Caco-2 (cell line): ENCODE measurements at regions of chr6 and their contacts with region 1.

Region 1: DNA sequence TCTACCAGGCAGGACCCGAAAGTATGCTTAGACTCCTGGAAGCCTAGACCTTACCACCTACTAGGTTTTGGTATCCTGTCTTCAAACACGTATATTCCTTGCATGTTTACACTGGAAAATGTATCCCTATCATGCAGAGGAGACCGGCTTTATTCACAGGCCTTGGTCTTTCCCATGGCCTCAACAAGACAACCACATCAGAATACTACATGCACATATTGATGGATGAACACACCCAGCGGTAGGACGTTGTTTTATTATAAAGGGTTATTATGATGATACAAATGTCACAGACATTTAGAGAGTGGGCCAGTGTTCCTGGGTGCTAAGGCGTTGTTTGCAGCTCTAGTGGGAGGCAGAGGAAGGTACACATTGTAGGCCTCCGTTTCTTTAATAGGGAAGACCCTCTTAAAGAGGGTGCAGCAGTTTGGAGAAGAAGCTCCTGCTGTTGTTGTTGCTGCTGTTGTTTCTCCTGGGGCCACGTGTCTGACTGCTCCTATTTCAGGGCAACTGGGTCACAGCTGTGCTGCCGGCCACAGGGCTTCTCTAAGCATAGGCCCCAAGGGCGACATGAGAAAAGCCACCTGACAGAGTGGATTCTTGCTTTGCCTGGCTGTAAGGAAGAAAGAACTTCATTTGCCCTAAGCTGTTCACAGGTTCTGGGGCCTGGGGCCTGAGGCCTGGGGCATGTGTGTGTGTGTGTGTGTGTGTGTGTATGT is 98.3 kb upstream of the SASH1 start:
- DNase-seq: peak in 1 of 2 experiments; percentile 33
- H3K4me3 ChIP-seq: no peak overlapping the region
- H3K4me3 Mint-ChIP-seq: no peak overlapping the region
- H3K27ac Mint-ChIP-seq: no peak overlapping the region
- H3K4me1 ChIP-seq: no peaks in the 10 kb centered on the region
- H3K4me1 Mint-ChIP-seq: peaks cover 5% of the 10 kb centered on the region
- H3K27me3 ChIP-seq: no peaks in the 10 kb centered on the region
- H3K27me3 Mint-ChIP-seq: no peaks in the 10 kb centered on the region
- CTCF ChIP-seq: no peak

Region 2: DNA sequence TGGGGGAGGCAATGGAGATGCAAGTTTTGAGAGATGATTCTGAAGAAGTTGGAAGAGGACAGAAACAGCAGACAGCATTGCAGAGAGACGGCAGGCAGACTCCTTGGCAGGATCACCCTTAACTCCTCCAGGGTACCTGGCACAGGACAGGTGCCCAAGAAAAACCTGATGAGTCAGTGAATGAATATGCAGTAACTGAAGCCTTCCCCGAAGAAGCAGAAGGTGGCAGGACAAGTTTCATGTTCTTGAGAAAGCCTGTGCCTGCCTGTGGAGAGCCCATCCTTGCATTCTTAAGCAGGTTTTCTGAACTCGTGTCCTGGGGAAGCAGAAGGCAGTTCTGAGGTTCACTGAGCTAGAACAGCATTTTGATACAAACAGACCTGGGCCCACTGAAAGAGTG is 18.6 kb after region 1 on chr6:
- CTCF ChIA-PET with region 1: no interaction called
- POLR2A ChIA-PET with region 1: no interaction called
- intact Hi-C with region 1: no loop called
- DNase-seq: no peak
- H3K4me3 ChIP-seq: no peak overlapping the region
- H3K4me3 Mint-ChIP-seq: no peak overlapping the region
- H3K27ac Mint-ChIP-seq: peak overlapping the region; percentile 85
- H3K4me1 ChIP-seq: peaks cover 34% of the 10 kb centered on the region
- H3K4me1 Mint-ChIP-seq: peaks cover 34% of the 10 kb centered on the region
- H3K27me3 ChIP-seq: no peaks in the 10 kb centered on the region
- H3K27me3 Mint-ChIP-seq: no peaks in the 10 kb centered on the region
- CTCF ChIP-seq: no peak

Region 3: DNA sequence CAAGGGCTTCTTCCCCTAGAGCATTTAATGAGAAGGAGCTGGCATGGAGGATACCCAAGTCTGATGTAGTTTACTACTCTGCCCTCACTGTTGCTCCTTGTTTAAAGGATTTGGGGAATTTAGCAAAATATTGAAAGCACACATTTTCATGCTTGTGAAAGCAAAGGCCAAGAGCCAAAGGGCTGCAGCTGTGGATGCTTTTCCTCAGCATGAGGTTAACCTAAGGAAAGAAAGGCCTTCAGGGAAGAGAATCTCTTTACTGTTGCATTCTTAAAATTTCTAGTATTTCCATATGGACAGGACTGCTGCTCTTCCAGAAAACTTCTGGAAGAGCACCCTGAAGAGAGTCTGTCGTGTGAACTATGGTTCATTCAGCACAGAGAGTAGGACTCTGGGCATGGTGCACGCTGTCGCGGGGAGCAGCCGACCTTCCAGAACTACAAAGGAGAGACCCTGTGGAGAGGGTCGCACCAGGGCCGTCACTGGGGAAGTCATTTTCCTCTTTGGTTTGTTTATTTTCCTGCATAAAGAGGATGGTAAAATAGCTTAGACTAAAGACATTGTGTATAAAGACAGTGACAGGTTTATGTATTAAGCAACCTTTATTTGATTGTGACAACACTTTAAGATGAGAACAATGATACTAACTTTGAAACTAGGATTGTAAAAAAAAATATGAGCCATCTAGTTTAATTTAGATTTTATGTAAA is 52.5 kb after region 1 on chr6:
- CTCF ChIA-PET with region 1: no interaction called
- POLR2A ChIA-PET with region 1: interaction called, 12 read pairs
- intact Hi-C with region 1: no loop called
- DNase-seq: no peak
- H3K4me3 ChIP-seq: no peak overlapping the region
- H3K4me3 Mint-ChIP-seq: no peak overlapping the region
- H3K27ac Mint-ChIP-seq: no peak overlapping the region
- H3K4me1 ChIP-seq: no peaks in the 10 kb centered on the region
- H3K4me1 Mint-ChIP-seq: no peaks in the 10 kb centered on the region
- H3K27me3 ChIP-seq: no peaks in the 10 kb centered on the region
- H3K27me3 Mint-ChIP-seq: no peaks in the 10 kb centered on the region
- CTCF ChIP-seq: no peak